Heart left ventricle (tissue), 16 donors: ENCODE measurements at regions of chr4 and their contacts with region 1.

Region 1: GRCh38 chr4:4762909-4763821 is 96.3 kb upstream of the MSX1 start:
- DNase-seq: peak in 1 of 5 donors; percentile 19
- ATAC-seq: no peak
- H3K4me3 ChIP-seq: no peak overlapping the region
- H3K27ac ChIP-seq: no peak overlapping the region
- H3K4me1 ChIP-seq: no peaks in the 10 kb centered on the region
- H3K27me3 ChIP-seq: peaks cover 0 to 25% (median 0%) of the 10 kb centered on the region in 9 donors
- CTCF ChIP-seq: no peak
- POLR2A ChIP-seq: no peak

Region 2: DNA sequence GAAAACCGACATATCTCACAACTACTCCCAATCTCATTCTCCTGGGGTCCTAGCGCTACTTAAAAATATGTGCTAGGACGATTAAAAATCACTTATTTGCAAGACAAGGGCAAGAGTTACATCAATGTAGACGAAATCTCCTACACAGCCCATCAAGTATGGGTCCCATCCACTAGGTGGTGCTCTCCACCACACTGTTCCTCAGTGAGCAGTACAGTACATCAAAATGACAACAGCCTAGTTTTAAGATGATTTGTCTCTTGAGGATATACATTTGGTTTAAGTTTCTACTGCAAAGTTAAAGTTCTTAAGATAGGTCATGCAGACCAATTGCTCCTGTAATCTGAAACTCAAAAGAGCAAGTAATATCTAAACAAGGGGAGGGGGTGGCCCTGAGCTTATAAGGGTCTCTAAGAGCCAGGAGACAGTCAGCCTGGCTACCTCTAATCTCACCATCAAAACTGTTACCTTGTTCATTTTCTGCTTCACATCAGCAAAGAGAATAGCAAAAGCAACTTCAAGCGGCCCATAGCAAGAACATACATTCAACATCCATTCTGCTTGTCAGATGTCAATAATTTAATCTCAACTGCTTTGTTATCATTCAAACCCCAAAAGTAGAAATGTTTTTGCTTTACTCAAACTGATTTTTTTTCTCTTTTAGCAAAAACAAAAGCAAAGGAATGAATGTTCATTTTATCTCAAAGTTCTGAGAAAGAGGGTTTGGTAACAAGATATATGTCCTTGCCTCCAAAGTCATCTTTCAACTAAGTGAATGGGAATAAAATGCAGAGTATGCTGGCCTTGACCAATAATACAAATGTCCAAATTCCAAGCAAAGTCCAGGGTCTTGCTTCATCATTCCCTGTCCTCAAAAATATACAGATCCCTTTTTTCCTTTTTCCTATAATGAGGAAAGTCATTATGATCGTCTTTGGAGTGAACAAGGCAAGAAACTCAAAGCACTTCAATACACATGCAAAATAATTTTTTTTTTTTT is 274.5 kb before region 1 on chr4:
- intact Hi-C with region 1: no loop called
- DNase-seq: peak in 4 of 5 donors; percentile 35 to 55 (median 44)
- ATAC-seq: peak; percentile 82 to 92 (median 86)
- H3K4me3 ChIP-seq: no peak overlapping the region
- H3K27ac ChIP-seq: no peak overlapping the region
- H3K4me1 ChIP-seq: peaks cover 0 to 19% (median 0%) of the 10 kb centered on the region in 12 donors
- H3K27me3 ChIP-seq: no peaks in the 10 kb centered on the region
- CTCF ChIP-seq: peak; percentile 79 to 94 (median 88)
- POLR2A ChIP-seq: no peak

Region 3: GRCh38 chr4:4775493-4776004 is 12.4 kb after region 1 on chr4:
- intact Hi-C with region 1: loop called in 1 of 10 experiments (anchors 1 kb)
- DNase-seq: peak in 4 of 5 donors; percentile 34 to 82 (median 40)
- ATAC-seq: peak; percentile 85 to 97 (median 93)
- H3K4me3 ChIP-seq: no peak overlapping the region
- H3K27ac ChIP-seq: no peak overlapping the region
- H3K4me1 ChIP-seq: peaks cover 0 to 7% (median 0%) of the 10 kb centered on the region in 12 donors
- H3K27me3 ChIP-seq: no peaks in the 10 kb centered on the region
- CTCF ChIP-seq: no peak
- POLR2A ChIP-seq: no peak